ENCODE measurements at regions of chr1 and their contacts with region 1.

Region 1: GRCh38 chr1:231757101-231757404 is 130.5 kb downstream of the DISC1 start:
- DNase-seq: no peak
- ATAC-seq: no peak
- H3K4me3 ChIP-seq: no peak overlapping the region
- H3K4me3 Mint-ChIP-seq: no peak overlapping the region
- H3K27ac ChIP-seq: no peak overlapping the region
- H3K27ac Mint-ChIP-seq: no peak overlapping the region
- H3K4me1 ChIP-seq: no peaks in the 10 kb centered on the region
- H3K4me1 Mint-ChIP-seq: no peaks in the 10 kb centered on the region
- H3K27me3 ChIP-seq: no peaks in the 10 kb centered on the region
- H3K27me3 Mint-ChIP-seq: no peaks in the 10 kb centered on the region
- CTCF ChIP-seq: peak; percentile 72

Region 2: GRCh38 chr1:232630047-232630893 is 873.2 kb after region 1 on chr1 and contains the start of gene SIPA1L2:
- CTCF ChIA-PET with region 1: no interaction called
- POLR2A ChIA-PET with region 1: no interaction called
- intact Hi-C with region 1: loop called in 1 of 2 experiments (anchors 2 kb)
- DNase-seq: peak; percentile 67 to 93 (median 82)
- ATAC-seq: peak; percentile 89
- H3K4me3 ChIP-seq: peak within 1 kb of the TSS; percentile 71
- H3K4me3 Mint-ChIP-seq: peak within 1 kb of the TSS; percentile 93
- H3K27ac ChIP-seq: no peak within 1 kb of the TSS
- H3K27ac Mint-ChIP-seq: peak within 1 kb of the TSS; percentile 42
- H3K4me1 ChIP-seq: peaks cover 18% of the 10 kb centered on the region
- H3K4me1 Mint-ChIP-seq: peaks cover 29% of the 10 kb centered on the region
- H3K27me3 ChIP-seq: peaks cover 6 to 19% of the 10 kb centered on the region in 2 experiments
- H3K27me3 Mint-ChIP-seq: peaks cover 39% of the 10 kb centered on the region
- CTCF ChIP-seq: peak; percentile 8
- total RNA-seq, gene SIPA1L2: 1.8 to 1.9 TPM

Region 3: DNA sequence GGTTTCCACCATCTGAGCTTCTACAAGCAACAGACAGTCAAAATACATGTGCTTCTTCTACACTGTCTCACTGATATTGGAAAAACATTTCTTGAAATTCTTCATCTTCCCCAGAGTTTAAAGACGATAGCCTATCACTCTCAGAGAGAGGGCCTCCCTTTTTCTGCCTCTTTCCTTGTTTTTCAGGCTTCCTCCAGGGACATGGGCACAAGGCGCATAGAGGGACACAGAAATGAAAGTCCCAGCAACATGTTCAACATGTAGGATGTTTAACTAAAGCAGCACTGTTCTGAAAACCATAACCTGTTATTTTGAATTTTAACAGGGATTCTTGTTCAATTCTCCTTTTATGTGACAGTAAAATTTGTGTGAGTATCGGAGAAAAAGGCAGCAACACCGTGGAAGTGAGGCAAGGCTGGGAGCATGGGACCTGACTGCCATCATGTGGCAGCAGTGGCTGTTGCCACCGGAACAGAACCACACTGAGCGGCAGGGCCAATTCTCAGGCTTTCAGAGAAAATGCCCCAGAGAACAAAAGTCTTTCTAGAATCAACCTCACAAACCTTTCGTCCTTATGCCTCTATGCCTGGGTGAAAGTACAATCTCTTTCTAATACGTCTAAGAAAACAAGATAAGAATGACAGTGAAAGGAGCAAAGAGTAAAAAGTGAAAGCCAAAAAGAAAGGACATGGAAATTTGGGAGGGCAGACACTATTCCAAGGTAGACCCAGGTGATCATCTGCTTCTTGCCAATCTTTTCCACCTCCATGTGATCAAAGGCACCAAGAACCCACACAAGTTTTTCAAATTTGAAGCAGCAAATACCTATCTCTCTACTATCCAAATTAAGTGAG is 1484.0 kb after region 1 on chr1:
- CTCF ChIA-PET with region 1: no interaction called
- POLR2A ChIA-PET with region 1: no interaction called
- intact Hi-C with region 1: loop called in 1 of 2 experiments (anchors 5 kb)
- DNase-seq: peak in 7 of 14 experiments; percentile 2 to 50 (median 5)
- ATAC-seq: no peak
- H3K4me3 ChIP-seq: no peak overlapping the region
- H3K4me3 Mint-ChIP-seq: no peak overlapping the region
- H3K27ac ChIP-seq: no peak overlapping the region
- H3K27ac Mint-ChIP-seq: no peak overlapping the region
- H3K4me1 ChIP-seq: no peaks in the 10 kb centered on the region
- H3K4me1 Mint-ChIP-seq: no peaks in the 10 kb centered on the region
- H3K27me3 ChIP-seq: no peaks in the 10 kb centered on the region
- H3K27me3 Mint-ChIP-seq: no peaks in the 10 kb centered on the region
- CTCF ChIP-seq: peak; percentile 46

Measured in CD4-positive, alpha-beta T cell (primary cell).